IMR-90 (cell line): ENCODE measurements at regions of chr1 and their contacts with region 1.

Region 1: GRCh38 chr1:183915625-183916510 is 110.9 kb downstream of the RGL1 start:
- DNase-seq: peak; percentile 99
- ATAC-seq: peak; percentile 95
- H3K4me3 ChIP-seq: no peak overlapping the region
- H3K27ac ChIP-seq: peak overlapping the region; percentile 20
- H3K4me1 ChIP-seq: peaks cover 6% of the 10 kb centered on the region
- H3K27me3 ChIP-seq: no peaks in the 10 kb centered on the region
- CTCF ChIP-seq: peak; percentile 95
- POLR2A ChIP-seq: peak; percentile 69; the same call in 1 of the 2 replicates
- RAD21 ChIP-seq: peak; percentile 97

Region 2: GRCh38 chr1:183655562-183656075 is 260.2 kb before region 1 on chr1:
- CTCF ChIA-PET with region 1: interaction called, 55 read pairs
- POLR2A ChIA-PET with region 1: no interaction called
- dilution Hi-C with region 1: loop called (anchors 25 kb)
- in situ Hi-C with region 1: loop called (anchors 5 kb)
- intact Hi-C with region 1: loop called (anchors 1 kb)
- DNase-seq: peak; percentile 84
- ATAC-seq: peak; percentile 96
- H3K4me3 ChIP-seq: no peak overlapping the region
- H3K27ac ChIP-seq: no peak overlapping the region
- H3K4me1 ChIP-seq: peaks cover 6% of the 10 kb centered on the region
- H3K27me3 ChIP-seq: no peaks in the 10 kb centered on the region
- CTCF ChIP-seq: peak; percentile 92
- POLR2A ChIP-seq: 0 out of 2 replicates have a peak, but pooled peaks have one; percentile 32
- RAD21 ChIP-seq: peak; percentile 92

Region 3: DNA sequence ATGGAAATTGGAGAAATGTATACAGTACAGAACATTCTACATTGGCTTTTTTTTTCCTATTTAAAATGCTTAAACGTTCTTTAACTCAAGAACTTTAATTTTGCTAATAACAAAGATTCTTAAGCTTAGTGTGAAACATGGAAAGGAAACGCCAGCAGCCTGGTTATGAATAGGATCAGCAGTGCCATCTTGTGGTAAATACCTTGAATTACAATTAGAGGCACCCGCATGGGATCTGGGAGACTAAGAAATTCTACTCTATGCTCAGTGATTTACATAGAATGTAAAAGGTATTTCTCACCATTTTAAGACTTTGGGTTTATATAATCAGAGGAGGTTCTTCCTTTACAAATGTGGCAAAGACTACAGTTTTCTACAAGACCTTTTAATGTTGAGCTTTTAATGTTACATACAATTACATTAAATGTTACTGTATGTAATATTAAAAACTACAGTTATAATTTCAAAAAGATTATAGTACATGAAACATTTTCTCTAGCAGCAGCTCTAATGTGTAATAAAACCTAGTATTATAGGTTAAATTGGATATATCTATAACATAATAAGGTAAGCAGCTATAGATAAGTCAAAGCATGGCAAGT is 230.7 kb before region 1 on chr1:
- CTCF ChIA-PET with region 1: interaction called, 15 read pairs
- POLR2A ChIA-PET with region 1: no interaction called
- dilution Hi-C with region 1: no loop called
- in situ Hi-C with region 1: no loop called
- intact Hi-C with region 1: loop called (anchors 1 kb)
- DNase-seq: peak; percentile 56
- ATAC-seq: peak; percentile 78; the same call in 1 of the 2 replicates
- H3K4me3 ChIP-seq: no peak overlapping the region
- H3K27ac ChIP-seq: no peak overlapping the region
- H3K4me1 ChIP-seq: no peaks in the 10 kb centered on the region
- H3K27me3 ChIP-seq: no peaks in the 10 kb centered on the region
- CTCF ChIP-seq: peak; percentile 70
- POLR2A ChIP-seq: no peak
- RAD21 ChIP-seq: peak; percentile 72

Region 4: GRCh38 chr1:183723571-183723970 is 192.3 kb before region 1 on chr1:
- CTCF ChIA-PET with region 1: no interaction called
- POLR2A ChIA-PET with region 1: no interaction called
- dilution Hi-C with region 1: no loop called
- in situ Hi-C with region 1: no loop called
- intact Hi-C with region 1: no loop called
- DNase-seq: no peak
- ATAC-seq: no peak
- H3K4me3 ChIP-seq: no peak overlapping the region
- H3K27ac ChIP-seq: no peak overlapping the region
- H3K4me1 ChIP-seq: no peaks in the 10 kb centered on the region; the same call in 1 of the 2 replicates
- H3K27me3 ChIP-seq: peaks cover 2% of the 10 kb centered on the region; the same call in 1 of the 2 replicates
- CTCF ChIP-seq: no peak
- POLR2A ChIP-seq: no peak
- RAD21 ChIP-seq: no peak

Region 5: DNA sequence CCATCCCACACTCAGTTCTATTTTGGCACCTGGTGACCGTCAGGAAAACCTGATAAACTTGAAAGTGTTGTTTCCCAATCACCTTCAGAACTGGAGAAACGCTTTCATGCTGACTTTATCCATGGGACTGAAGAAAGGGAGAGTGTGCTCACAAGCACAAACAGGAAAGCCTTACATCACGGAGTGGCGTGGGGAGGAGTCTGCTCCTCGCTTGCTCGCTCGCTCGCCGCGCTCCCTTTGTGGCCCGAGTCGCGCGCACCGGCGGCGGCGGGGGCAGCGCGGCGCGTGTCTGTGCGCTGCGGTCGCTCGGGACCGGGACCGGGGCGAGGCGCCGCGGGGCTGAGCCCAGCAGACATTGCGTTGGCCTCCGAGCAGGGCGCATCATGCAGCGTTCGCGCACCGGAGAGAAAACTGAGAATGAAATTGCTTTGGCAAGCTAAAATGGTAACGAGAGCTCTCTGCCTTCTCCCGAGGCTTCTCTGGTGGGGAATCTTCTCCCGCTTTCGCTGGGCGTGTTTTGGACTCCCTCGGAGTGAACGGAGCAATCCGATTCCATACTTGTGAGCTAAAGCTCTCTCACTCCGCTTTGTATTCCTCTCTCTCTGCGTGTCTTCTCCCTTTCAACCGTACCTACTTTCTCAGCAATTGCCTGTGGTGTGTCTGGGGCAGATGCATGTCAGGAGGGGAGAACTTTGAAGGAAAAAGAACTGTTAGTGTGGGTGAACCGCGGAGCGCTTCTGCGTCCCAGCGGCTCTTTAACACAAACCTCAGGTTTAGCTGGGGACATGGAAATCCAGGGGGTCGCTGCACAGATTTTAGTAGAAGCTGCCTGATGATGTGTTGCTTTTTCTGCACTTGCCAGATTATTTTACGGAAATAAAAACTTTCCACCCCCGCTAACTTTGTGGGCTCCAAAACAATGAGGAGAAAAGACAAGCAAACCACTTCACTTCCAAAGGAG is 110.7 kb before region 1 on chr1 and contains the start of gene RGL1:
- CTCF ChIA-PET with region 1: interaction called, 3 read pairs
- POLR2A ChIA-PET with region 1: no interaction called
- dilution Hi-C with region 1: no loop called
- in situ Hi-C with region 1: no loop called
- intact Hi-C with region 1: loop called (anchors 1 kb)
- DNase-seq: peak; percentile 75
- ATAC-seq: peak; percentile 89
- H3K4me3 ChIP-seq: peak within 1 kb of the TSS; percentile 80
- H3K27ac ChIP-seq: peak within 1 kb of the TSS; percentile 78
- H3K4me1 ChIP-seq: peaks cover 7% of the 10 kb centered on the region
- H3K27me3 ChIP-seq: no peaks in the 10 kb centered on the region
- CTCF ChIP-seq: no peak
- POLR2A ChIP-seq: peak; percentile 45; the same call in 1 of the 2 replicates
- RAD21 ChIP-seq: no peak
- total RNA-seq, gene RGL1: 7.5 TPM in 2 replicates

Region 6: DNA sequence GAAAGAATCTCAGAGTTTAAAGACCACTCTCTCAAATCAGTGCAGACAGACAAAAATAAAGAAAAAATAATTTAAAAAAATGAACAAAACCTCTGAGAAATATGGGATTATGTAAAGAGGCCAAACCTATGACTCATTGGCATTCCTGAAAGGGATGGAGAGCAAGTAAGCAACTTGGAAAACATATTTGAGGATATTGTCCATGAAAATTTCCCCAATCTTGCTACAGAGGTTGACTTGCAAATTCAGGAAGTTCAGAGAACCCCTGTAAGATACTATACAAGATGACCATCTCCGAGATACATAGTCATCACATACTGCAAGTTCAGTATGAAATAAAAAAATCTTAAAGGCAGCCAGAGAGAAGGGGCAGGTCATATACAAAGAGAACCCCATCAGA is 1444.8 kb after region 1 on chr1:
- CTCF ChIA-PET with region 1: no interaction called
- POLR2A ChIA-PET with region 1: no interaction called
- dilution Hi-C with region 1: no loop called
- in situ Hi-C with region 1: no loop called
- intact Hi-C with region 1: no loop called
- DNase-seq: peak; percentile 50
- ATAC-seq: peak; percentile 57
- H3K4me3 ChIP-seq: no peak overlapping the region
- H3K27ac ChIP-seq: no peak overlapping the region
- H3K4me1 ChIP-seq: no peaks in the 10 kb centered on the region
- H3K27me3 ChIP-seq: no peaks in the 10 kb centered on the region
- CTCF ChIP-seq: no peak
- POLR2A ChIP-seq: no peak
- RAD21 ChIP-seq: no peak